T-cell (primary cell): ENCODE measurements at regions of chr5 and their contacts with region 1.

Region 1: GRCh38 chr5:79612667-79613198 is 492 bp downstream of the TENT2 start:
- DNase-seq: no peak
- ATAC-seq: peak in 1 of 4 experiments; percentile 9
- H3K4me3 ChIP-seq: peak overlapping the region; percentile 91 to 100
- H3K4me3 Mint-ChIP-seq: peak overlapping the region; percentile 97 to 99 (median 97)
- H3K27ac ChIP-seq: peak overlapping the region; percentile 93
- H3K27ac Mint-ChIP-seq: peak overlapping the region; percentile 96 to 98
- H3K4me1 ChIP-seq: peaks cover 10 to 12% of the 10 kb centered on the region in 2 experiments
- H3K4me1 Mint-ChIP-seq: peaks cover 46 to 57% (median 46%) of the 10 kb centered on the region in 3 donors
- H3K27me3 ChIP-seq: peaks cover 0 to 3% of the 10 kb centered on the region in 2 experiments
- H3K27me3 Mint-ChIP-seq: peaks cover 3 to 5% of the 10 kb centered on the region in 2 donors

Region 2: DNA sequence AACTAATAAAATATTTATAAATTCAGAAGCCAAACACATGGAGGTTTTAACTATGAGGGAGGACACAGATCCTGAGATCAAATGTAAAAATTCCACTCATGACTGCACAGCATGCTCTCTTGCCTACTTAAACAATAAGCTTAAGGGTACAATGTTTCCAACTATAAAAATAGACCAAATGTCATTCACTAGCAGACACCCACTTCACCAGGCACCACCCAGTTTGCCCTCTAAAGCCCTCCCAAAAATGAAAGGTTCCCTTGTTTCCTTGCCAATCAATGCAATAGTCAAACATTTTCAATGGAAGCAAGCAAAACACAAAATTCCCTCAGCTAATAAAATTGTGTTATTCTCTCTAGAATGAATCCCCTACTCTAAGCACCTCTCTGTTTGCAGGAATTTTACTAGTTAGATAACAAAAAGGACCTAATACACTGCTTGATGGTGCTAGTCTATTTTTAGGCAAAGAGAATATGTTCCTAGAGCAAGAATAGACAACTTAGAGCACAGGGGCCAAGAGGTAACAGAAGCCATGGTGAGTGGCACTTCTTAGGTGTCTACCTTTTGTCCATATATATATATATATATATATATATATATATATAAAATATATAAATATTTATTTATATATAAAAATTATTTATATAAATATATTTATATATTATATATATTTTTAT is 234.1 kb before region 1 on chr5:
- CTCF ChIA-PET with region 1: no interaction called
- POLR2A ChIA-PET with region 1: no interaction called
- DNase-seq: no peak
- ATAC-seq: no peak
- H3K4me3 ChIP-seq: no peak overlapping the region
- H3K4me3 Mint-ChIP-seq: no peak overlapping the region
- H3K27ac ChIP-seq: no peak overlapping the region
- H3K27ac Mint-ChIP-seq: no peak overlapping the region
- H3K4me1 ChIP-seq: no peaks in the 10 kb centered on the region
- H3K4me1 Mint-ChIP-seq: no peaks in the 10 kb centered on the region
- H3K27me3 ChIP-seq: peaks cover 0 to 8% of the 10 kb centered on the region in 2 experiments
- H3K27me3 Mint-ChIP-seq: no peaks in the 10 kb centered on the region

Region 3: GRCh38 chr5:79636981-79637733 is 24.4 kb after region 1 on chr5:
- CTCF ChIA-PET with region 1: no interaction called
- POLR2A ChIA-PET with region 1: interaction called, 12 to 15 read pairs
- DNase-seq: no peak
- ATAC-seq: no peak
- H3K4me3 ChIP-seq: no peak overlapping the region
- H3K4me3 Mint-ChIP-seq: no peak overlapping the region
- H3K27ac ChIP-seq: no peak overlapping the region
- H3K27ac Mint-ChIP-seq: peak overlapping the region in 1 of 2 donors; percentile 4
- H3K4me1 ChIP-seq: no peaks in the 10 kb centered on the region
- H3K4me1 Mint-ChIP-seq: peaks cover 23 to 29% (median 28%) of the 10 kb centered on the region in 3 donors
- H3K27me3 ChIP-seq: no peaks in the 10 kb centered on the region
- H3K27me3 Mint-ChIP-seq: no peaks in the 10 kb centered on the region

Region 4: GRCh38 chr5:79642212-79642611 is 29.5 kb after region 1 on chr5:
- CTCF ChIA-PET with region 1: no interaction called
- POLR2A ChIA-PET with region 1: interaction called in 1 of 2 experiments, 12 read pairs
- DNase-seq: no peak
- ATAC-seq: no peak
- H3K4me3 ChIP-seq: no peak overlapping the region
- H3K4me3 Mint-ChIP-seq: no peak overlapping the region
- H3K27ac ChIP-seq: no peak overlapping the region
- H3K27ac Mint-ChIP-seq: no peak overlapping the region
- H3K4me1 ChIP-seq: no peaks in the 10 kb centered on the region
- H3K4me1 Mint-ChIP-seq: peaks cover 16 to 23% (median 21%) of the 10 kb centered on the region in 3 donors
- H3K27me3 ChIP-seq: no peaks in the 10 kb centered on the region
- H3K27me3 Mint-ChIP-seq: no peaks in the 10 kb centered on the region

Region 5: DNA sequence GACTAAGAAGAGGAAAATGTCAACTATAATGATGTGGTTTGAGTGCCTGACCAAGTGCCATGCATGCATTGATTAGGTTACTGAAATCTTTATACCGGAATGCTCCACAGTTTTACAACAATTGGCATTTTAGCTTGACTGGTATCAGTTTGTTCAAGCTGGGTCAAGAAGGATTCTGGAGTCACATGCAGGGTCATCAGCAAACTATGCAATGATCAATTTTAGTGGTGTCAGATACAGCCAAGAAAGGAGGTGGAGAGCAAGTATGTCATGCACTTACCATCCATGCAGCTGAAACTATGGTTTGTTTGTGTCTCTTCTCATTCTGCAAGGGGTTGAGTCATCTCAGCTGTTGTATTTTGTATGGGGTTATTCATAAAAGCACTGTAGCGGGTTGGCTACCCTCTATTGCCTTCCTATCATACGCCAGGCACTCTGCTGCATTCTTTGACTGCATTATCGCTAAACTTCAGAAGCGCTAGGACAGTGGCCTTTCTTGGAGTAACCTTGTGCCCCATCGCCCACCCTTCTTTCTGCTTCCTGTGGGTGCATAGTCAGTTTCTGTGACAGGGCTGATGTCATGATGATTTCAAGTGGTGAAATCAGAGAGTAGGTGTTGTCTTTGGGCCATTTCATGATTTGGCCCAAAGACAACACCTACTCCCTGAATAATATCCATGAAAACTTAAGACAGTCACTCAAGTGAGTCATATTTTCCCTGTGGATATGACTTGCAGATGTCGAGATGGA is 232.9 kb after region 1 on chr5:
- CTCF ChIA-PET with region 1: no interaction called
- POLR2A ChIA-PET with region 1: no interaction called
- DNase-seq: no peak
- ATAC-seq: no peak
- H3K4me3 ChIP-seq: no peak overlapping the region
- H3K4me3 Mint-ChIP-seq: no peak overlapping the region
- H3K27ac ChIP-seq: no peak overlapping the region
- H3K27ac Mint-ChIP-seq: no peak overlapping the region
- H3K4me1 ChIP-seq: peaks cover 0 to 3% of the 10 kb centered on the region in 2 experiments
- H3K4me1 Mint-ChIP-seq: no peaks in the 10 kb centered on the region
- H3K27me3 ChIP-seq: peaks cover 0 to 27% of the 10 kb centered on the region in 2 experiments
- H3K27me3 Mint-ChIP-seq: peaks cover 1 to 16% of the 10 kb centered on the region in 2 donors